ENCODE measurements at regions of chr22 and their contacts with region 1.

Region 1: DNA sequence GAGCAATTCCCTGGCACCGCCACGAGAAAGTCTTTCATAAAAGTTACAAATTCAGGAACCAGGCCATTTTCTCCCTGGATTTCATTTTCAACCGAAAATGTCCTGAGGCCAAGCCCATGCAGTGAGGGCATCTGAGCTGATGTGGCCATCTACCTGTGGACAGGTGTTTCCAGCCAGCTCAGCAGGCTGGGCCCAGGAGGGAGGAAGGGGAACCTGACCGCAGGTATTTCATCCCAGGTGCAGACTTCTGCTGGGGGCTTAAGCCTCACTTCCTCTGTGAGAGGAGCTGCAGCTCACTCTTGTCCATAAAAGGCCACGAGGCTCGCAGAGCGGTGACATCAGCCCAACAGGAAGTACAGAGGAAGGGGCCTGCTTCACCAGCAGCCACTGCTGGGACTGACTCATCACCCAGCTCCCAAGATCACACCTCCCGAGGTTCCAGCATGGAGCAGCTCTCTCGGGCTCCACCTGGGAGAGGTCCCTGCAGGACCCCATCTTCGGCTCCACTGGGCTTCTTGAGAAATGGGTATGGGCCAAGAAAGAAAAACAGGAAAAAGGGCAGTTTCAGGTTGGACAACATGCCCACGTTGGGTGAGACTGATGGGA is 56.4 kb downstream of the MYH9 start:
- DNase-seq: peak; percentile 87 to 96
- H3K4me3 ChIP-seq: no peak overlapping the region
- CTCF ChIP-seq: no peak
- POLR2A ChIP-seq: no peak

Region 2: DNA sequence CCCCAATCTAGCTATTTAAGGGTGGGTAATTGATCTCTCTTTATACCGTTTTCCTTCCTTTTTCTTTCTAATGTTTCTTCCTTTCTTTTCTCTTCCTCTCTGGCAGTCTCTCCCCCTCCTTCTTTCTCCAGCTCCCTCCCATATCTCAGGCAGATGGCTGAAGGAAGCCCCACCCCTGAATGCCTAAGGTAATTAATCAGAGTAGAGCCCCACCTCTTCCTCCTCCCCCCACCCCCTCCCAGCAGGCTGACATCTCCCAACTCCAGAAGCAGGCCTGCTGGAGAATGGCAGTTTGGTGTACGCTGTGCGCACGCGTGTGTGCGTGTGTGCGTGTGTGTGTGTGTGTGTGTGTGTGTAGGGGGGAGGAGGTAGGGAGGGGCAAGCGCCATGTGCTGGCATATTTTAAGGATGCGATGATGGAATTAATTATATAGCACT is 491.1 kb before region 1 on chr22:
- intact Hi-C with region 1: no loop called
- DNase-seq: peak; percentile 82 to 95
- H3K4me3 ChIP-seq: peak overlapping the region; percentile 17
- CTCF ChIP-seq: no peak
- POLR2A ChIP-seq: no peak

Region 3: GRCh38 chr22:36387752-36388518 is 56.5 kb after region 1 on chr22 and contains the start of gene MYH9:
- intact Hi-C with region 1: loop called (anchors 10 kb)
- DNase-seq: peak; percentile 99 to 100
- H3K4me3 ChIP-seq: peak within 1 kb of the TSS; percentile 93
- CTCF ChIP-seq: no peak
- POLR2A ChIP-seq: peak in 1 of 2 donors; percentile 67
- total RNA-seq, gene MYH9: 258 to 335 (median 307) TPM

Measured in lower leg skin (tissue), 4 donors.